ENCODE measurements at regions of chr1 and their contacts with region 1.

Region 1: GRCh38 chr1:66503841-66504470 is 30.0 kb upstream of the SGIP1 start:
- DNase-seq: peak; percentile 49
- H3K4me3 Mint-ChIP-seq: no peak overlapping the region
- H3K27ac Mint-ChIP-seq: no peak overlapping the region
- H3K4me1 Mint-ChIP-seq: no peaks in the 10 kb centered on the region
- H3K27me3 Mint-ChIP-seq: peaks cover 14% of the 10 kb centered on the region

Region 2: DNA sequence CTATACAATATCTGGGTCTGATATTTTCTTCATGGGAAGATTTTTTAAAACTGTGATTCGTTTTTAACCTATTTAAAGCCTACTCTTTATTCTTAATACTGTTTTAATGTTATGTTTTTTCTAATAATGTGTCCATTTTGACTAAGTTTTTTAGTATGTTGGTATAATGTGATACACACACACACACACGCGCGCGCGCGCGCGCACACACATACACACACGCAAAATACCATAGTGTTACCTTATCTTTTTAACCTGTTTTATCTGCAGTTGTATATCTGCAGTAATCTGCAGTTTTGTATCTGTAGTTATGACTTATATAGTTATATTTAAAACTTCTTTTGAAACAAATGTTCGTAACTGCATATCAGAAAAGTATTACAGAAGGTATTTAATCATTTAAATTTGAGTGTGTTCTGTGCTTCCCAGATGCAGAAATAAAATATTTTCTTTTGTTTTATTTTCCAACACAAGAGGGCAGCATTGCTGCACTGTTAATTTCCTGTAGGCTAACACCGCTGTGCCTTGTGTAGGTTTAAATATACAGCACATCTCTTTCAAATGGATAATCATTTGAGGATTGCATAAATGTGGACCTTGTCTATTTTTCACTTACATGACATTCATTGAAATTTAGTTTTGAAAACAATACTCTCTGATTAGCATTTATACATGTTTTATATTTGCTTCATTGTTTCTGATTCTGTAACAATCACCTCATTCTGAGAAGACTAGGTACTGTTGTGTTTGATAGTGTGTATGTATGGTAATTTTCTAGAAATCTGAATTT is 545.2 kb before region 1 on chr1:
- CTCF ChIA-PET with region 1: interaction called, 8 read pairs
- POLR2A ChIA-PET with region 1: no interaction called
- intact Hi-C with region 1: loop called (anchors 1 kb)
- DNase-seq: peak; percentile 13
- H3K4me3 Mint-ChIP-seq: no peak overlapping the region
- H3K27ac Mint-ChIP-seq: no peak overlapping the region
- H3K4me1 Mint-ChIP-seq: no peaks in the 10 kb centered on the region
- H3K27me3 Mint-ChIP-seq: peaks cover 2% of the 10 kb centered on the region

Region 3: DNA sequence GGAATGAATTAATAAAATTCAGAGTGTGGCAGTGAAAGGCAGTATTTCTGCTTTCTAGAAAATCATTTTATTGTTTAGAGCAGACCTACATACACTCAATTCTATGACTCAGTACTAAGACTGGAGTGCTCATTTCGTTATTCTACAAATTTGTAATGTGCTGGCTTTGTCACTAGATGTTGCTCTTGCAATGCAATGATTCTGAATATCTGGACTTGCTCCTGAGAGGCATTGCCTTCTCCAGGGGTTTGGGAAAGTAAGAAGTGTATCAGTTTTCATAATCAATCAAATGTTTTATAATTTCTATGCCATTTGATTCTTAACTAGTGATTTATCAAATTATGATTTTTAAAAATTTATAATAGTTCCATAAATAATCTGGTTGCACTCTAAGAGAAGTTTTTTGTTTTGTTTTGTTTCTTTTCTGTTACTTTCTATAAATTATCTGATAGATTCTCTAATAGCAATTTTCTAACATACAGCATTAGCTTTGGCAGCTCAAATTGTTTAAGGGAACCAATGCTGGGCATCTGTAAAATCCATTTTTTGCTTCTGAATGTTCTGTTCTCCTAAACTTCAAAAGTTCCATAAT is 250.5 kb before region 1 on chr1:
- CTCF ChIA-PET with region 1: interaction called, 54 read pairs
- POLR2A ChIA-PET with region 1: no interaction called
- intact Hi-C with region 1: loop called (anchors 1 kb)
- DNase-seq: no peak
- H3K4me3 Mint-ChIP-seq: no peak overlapping the region
- H3K27ac Mint-ChIP-seq: no peak overlapping the region
- H3K4me1 Mint-ChIP-seq: peaks cover 51% of the 10 kb centered on the region
- H3K27me3 Mint-ChIP-seq: no peaks in the 10 kb centered on the region

Region 4: GRCh38 chr1:66331657-66332547 is 172.1 kb before region 1 on chr1:
- CTCF ChIA-PET with region 1: no interaction called
- POLR2A ChIA-PET with region 1: no interaction called
- intact Hi-C with region 1: no loop called
- DNase-seq: peak; percentile 75
- H3K4me3 Mint-ChIP-seq: peak overlapping the region; percentile 93
- H3K27ac Mint-ChIP-seq: peak overlapping the region; percentile 96
- H3K4me1 Mint-ChIP-seq: peaks cover 48% of the 10 kb centered on the region
- H3K27me3 Mint-ChIP-seq: no peaks in the 10 kb centered on the region

Region 5: DNA sequence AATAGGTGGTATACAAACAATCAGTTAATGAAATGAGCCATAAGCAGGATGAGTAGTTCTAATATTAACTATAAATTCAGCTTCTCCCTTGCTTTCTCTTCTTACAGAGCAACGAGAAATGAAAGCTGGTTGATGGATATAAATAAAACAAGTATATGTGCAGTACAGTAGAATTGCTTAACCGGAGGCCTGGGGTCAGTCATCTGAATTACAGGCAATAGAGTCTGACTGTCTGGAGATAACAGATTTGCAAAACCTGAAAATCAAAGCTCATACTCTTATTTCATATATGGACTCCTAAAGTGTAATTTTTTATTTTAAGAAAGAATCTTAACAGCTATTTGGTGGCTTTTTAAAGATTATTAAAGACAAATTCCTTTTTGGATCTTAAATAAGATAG is 13.1 kb before region 1 on chr1:
- CTCF ChIA-PET with region 1: interaction called, 12 read pairs
- POLR2A ChIA-PET with region 1: no interaction called
- intact Hi-C with region 1: no loop called
- DNase-seq: no peak
- H3K4me3 Mint-ChIP-seq: no peak overlapping the region
- H3K27ac Mint-ChIP-seq: no peak overlapping the region
- H3K4me1 Mint-ChIP-seq: no peaks in the 10 kb centered on the region
- H3K27me3 Mint-ChIP-seq: no peaks in the 10 kb centered on the region

Region 6: DNA sequence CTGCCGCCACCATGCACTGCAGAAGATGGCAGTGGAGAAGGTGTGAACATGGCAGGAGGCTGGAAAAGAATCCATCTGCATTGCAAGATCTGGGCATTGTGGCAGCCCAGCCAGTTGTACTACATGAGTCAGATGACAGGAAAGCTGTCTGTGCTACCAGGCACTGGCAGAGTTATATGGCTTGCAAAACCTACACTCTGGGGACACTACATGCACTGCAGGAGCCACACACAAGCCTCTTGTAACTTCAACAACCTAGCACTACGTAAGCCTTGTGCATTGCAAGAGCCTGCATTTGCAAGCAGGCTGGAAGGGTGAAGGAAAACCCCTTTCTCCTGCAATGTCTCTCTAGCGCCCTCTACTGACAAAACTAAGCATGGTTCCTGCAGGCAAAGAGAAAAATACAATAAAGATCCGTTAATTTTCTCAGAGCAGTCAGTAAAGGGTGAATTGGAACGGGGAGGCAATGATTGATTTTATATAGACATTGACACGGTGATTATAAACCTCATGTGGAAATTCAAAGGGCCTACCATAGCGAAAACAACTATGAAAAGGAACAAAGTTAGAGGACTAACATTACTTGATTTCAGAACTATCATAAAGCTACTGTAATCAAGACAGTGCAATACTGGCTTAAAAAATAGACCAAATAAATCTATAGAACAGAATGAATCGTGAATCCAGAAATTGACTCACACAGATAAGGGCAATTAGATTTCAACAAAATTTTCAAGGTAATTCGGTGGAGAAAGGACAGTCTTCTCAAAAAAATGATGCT is 222.1 kb after region 1 on chr1:
- CTCF ChIA-PET with region 1: interaction called, 9 read pairs
- POLR2A ChIA-PET with region 1: no interaction called
- intact Hi-C with region 1: loop called (anchors 10 kb)
- DNase-seq: peak; percentile 61
- H3K4me3 Mint-ChIP-seq: no peak overlapping the region
- H3K27ac Mint-ChIP-seq: no peak overlapping the region
- H3K4me1 Mint-ChIP-seq: peaks cover 10% of the 10 kb centered on the region
- H3K27me3 Mint-ChIP-seq: peaks cover 8% of the 10 kb centered on the region

Region 7: GRCh38 chr1:66747501-66747900 is 243.5 kb after region 1 on chr1:
- CTCF ChIA-PET with region 1: no interaction called
- POLR2A ChIA-PET with region 1: no interaction called
- intact Hi-C with region 1: no loop called
- DNase-seq: no peak
- H3K4me3 Mint-ChIP-seq: no peak overlapping the region
- H3K27ac Mint-ChIP-seq: no peak overlapping the region
- H3K4me1 Mint-ChIP-seq: peaks cover 5% of the 10 kb centered on the region
- H3K27me3 Mint-ChIP-seq: peaks cover 30% of the 10 kb centered on the region